ENCODE measurements at regions of chr11 and their contacts with region 1.

Region 1: GRCh38 chr11:2877474-2877873 is 8.1 kb downstream of the CDKN1C start:
- DNase-seq: no peak
- H3K4me3 ChIP-seq: no peak overlapping the region
- H3K27ac ChIP-seq: no peak overlapping the region
- H3K4me1 ChIP-seq: peaks cover 0 to 1% (median 0%) of the 10 kb centered on the region in 4 donors
- H3K27me3 ChIP-seq: peaks cover under 1% of the 10 kb centered on the region
- CTCF ChIP-seq: no peak
- EP300 ChIP-seq: no peak
- POLR2A ChIP-seq: no peak

Region 2: DNA sequence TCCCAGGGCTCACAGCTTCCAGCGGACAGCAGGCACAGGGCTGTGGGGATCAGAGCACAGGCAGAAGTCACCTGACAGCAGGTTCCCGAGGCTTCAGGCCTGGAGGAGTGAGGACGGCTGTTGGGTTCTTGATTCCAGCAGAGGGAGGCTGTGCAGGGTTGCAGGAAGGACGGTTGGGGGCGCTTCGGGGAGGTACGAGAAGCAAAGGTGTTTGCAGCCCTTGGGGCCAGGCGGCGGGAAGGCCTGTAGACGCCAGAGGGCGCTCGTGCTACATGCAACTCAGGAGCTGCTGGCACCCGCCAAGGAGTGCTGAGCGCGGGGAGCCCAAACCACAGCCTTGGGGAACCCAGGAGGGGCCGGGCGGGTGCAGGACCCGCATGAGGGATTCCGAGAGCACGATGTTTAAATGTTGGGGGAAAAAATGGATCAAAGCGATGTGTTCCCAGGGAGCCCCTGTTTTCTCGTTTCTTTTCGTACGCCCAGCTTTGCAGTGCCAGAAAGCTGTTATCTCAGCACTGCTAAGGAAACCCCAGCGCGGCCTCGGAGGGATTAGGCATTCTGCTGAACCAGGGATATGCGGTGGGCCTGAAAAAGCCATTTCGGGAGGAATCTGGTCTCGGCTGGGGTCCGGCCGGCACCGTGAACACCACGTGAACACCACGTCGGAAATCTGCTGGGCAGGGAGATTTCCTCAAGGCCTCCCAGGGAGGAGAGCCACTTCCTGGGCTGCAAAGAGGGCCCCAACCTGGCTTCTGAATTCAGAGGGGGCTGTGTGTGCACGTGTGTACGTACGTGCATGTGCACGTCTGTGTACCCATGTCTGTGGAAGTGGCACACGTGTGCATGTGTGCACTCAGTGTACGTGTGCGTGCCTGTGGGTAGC is 344.5 kb before region 1 on chr11:
- in situ Hi-C with region 1: loop called in 1 of 4 experiments (anchors 5 kb)
- intact Hi-C with region 1: no loop called
- DNase-seq: peak; percentile 93
- H3K4me3 ChIP-seq: peak overlapping the region in 2 of 4 donors; percentile 9 to 12
- H3K27ac ChIP-seq: peak overlapping the region in 2 of 4 donors; percentile 8 to 37
- H3K4me1 ChIP-seq: peaks cover 5 to 22% (median 7%) of the 10 kb centered on the region in 4 donors
- H3K27me3 ChIP-seq: no peaks in the 10 kb centered on the region
- CTCF ChIP-seq: peak; percentile 99
- EP300 ChIP-seq: no peak
- POLR2A ChIP-seq: no peak